ENCODE measurements at regions of chr2 and their contacts with region 1.

Region 1: DNA sequence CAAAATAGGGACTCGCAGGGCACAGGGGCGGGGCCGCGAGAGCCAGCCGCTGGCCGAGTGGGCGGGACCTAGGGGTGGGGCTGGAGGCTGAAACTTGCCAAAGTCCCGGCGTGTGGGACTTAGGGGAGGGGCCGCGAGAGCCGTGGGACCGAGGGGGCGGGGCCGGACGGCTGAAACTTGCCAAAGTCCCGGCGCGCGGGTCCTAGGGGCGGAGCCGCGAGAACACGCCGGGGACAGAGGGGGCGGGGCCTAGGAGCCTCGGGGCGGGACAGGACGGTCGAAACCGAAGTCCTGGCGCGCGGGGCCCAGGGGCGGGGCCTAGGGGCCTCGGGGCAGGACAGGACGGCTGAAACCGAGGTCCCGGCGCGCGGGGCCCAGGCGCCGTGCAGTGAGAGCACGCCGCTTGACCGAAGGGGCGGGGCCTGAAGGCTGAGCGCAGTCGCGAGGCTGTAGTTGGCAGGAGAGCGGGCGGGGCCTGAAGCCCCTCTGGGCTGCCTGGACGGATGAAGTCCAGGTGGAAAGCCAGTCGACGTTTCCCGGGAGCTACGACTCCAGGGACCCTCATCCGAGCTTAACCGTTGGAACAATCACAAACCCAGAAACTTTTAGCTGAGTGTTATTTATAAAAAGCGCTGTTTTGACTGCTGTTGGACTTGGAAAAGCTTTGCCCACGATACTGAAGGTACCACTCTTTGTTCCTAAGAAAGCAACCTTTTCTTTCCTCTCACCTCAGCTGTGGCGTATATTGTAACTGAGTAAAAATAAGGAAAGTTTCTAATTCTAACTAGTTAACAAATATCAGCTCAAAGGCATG is 475 bp upstream of the BARD1 start:
- DNase-seq: peak; percentile 100
- H3K4me3 Mint-ChIP-seq: peak overlapping the region; percentile 99
- H3K27ac Mint-ChIP-seq: peak overlapping the region; percentile 99
- H3K4me1 Mint-ChIP-seq: peaks cover 32% of the 10 kb centered on the region
- H3K27me3 Mint-ChIP-seq: peaks cover 3% of the 10 kb centered on the region

Region 2: DNA sequence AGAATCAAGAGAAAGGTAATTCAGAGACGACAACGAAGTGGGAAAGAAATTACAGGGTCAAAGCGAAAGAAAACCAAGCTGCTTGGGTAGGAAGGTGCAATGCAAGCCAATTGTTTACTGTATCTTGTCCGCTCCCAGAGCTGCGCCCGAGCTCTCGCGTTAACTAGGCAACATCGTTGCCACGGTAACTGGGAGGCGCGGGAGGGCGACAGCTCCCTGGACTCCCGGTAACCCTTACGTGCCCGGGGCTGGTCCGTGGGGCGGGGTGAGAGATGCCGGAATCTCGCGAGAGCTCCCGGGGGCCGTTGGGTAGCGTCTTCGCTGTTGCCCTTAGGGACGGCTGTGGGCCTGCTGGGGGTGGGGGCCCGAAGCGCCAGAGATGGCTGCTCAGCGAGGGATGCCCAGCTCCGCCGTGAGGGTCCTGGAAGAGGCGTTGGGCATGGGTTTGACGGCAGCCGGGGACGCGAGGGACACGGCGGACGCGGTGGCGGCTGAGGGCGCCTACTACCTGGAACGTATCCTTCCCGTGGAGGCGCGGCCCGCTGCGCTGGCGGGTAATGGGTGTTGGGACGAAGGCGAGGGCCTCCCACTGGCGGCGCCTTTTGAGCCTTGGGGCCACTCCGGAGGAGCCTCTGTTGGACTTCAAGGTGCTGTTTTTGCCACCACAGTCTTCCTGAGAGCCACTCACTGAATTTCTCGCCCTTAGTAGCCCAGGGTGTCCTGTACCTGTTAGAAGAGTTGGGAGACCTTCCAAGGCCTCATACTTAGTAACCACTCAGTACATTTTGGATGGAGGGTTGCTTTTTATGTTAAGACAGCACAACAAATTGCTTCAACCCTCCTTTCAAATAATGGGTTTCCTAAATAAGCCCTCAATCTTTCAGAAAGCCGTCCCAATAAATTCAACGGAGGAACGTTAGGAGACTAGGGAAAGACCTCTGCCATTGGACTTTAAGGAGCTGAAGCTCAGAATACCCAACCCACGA is 1525.6 kb before region 1 on chr2 and contains the start of gene SPAG16:
- CTCF ChIA-PET with region 1: no interaction called
- POLR2A ChIA-PET with region 1: no interaction called
- intact Hi-C with region 1: loop called (anchors 1 kb)
- DNase-seq: peak; percentile 99
- H3K4me3 Mint-ChIP-seq: peak within 1 kb of the TSS; percentile 82
- H3K27ac Mint-ChIP-seq: peak within 1 kb of the TSS; percentile 69
- H3K4me1 Mint-ChIP-seq: peaks cover 28% of the 10 kb centered on the region
- H3K27me3 Mint-ChIP-seq: peaks cover 2% of the 10 kb centered on the region
- total RNA-seq, gene SPAG16: 9.1 to 10.4 TPM

Region 3: DNA sequence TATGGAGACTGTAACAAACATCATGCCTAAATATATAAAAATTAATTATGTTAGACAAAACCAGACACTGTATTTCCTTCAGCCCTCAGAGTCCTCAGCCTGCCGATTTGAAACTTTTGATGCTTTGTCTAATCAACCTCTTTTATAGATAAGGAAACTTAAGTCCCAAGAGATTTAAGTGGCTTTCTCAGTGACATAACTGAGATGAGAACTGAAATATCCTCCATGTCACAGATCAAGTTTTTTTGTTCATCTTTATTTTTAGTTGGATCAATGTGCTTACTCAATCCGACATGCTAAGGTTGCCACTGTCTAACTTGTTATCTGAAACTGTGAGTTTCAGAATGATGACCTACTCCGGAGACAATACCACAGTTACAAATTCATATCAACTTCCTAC is 72.8 kb before region 1 on chr2:
- CTCF ChIA-PET with region 1: no interaction called
- POLR2A ChIA-PET with region 1: no interaction called
- intact Hi-C with region 1: loop called (anchors 5 kb)
- DNase-seq: no peak
- H3K4me3 Mint-ChIP-seq: no peak overlapping the region
- H3K27ac Mint-ChIP-seq: no peak overlapping the region
- H3K4me1 Mint-ChIP-seq: peaks cover 5% of the 10 kb centered on the region
- H3K27me3 Mint-ChIP-seq: no peaks in the 10 kb centered on the region

Region 4: GRCh38 chr2:215311625-215312396 is 501.9 kb after region 1 on chr2 and contains the start of gene ATIC:
- CTCF ChIA-PET with region 1: no interaction called
- POLR2A ChIA-PET with region 1: interaction called, 3 read pairs
- intact Hi-C with region 1: loop called (anchors 1 kb)
- DNase-seq: peak; percentile 95
- H3K4me3 Mint-ChIP-seq: peak within 1 kb of the TSS; percentile 91
- H3K27ac Mint-ChIP-seq: peak within 1 kb of the TSS; percentile 88
- H3K4me1 Mint-ChIP-seq: peaks cover 31% of the 10 kb centered on the region
- H3K27me3 Mint-ChIP-seq: no peaks in the 10 kb centered on the region
- total RNA-seq, gene ATIC: 256 to 261 TPM

Measured in activated CD4-positive, alpha-beta memory T cell treated with anti-CD3 and anti-CD28 coated beads for 36 hours (primary cell).